ENCODE measurements at regions of chr10 and their contacts with region 1.

Region 1: GRCh38 chr10:63157845-63158624 is 24.9 kb downstream of the NRBF2 start:
- DNase-seq: peak; percentile 41
- ATAC-seq: peak; percentile 85
- H3K4me3 Mint-ChIP-seq: no peak overlapping the region
- H3K27ac Mint-ChIP-seq: no peak overlapping the region
- H3K4me1 Mint-ChIP-seq: peaks cover 4% of the 10 kb centered on the region
- H3K27me3 Mint-ChIP-seq: no peaks in the 10 kb centered on the region
- CTCF ChIP-seq: peak; percentile 93

Region 2: DNA sequence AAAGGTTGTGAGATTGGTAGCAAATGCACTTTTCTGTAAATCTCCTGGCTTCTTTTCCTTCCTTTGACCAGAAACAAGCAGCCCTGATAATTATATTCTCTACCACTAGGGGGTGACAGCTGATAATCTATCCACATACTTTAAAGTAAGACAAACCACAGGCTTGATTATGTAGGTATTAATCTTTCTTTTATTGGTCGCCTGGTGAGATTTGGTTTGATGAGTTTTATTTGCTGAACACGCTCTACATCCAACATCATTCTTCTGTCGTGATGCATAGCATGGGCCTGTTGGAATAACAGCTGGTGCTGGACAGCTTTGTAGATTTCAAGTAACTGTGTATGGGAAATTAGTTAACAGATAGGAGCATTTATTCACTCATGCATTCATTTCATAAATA is 720.3 kb before region 1 on chr10:
- CTCF ChIA-PET with region 1: interaction called, 21 read pairs
- POLR2A ChIA-PET with region 1: no interaction called
- intact Hi-C with region 1: loop called (anchors 5 kb)
- DNase-seq: no peak
- ATAC-seq: peak; percentile 63
- H3K4me3 Mint-ChIP-seq: no peak overlapping the region
- H3K27ac Mint-ChIP-seq: no peak overlapping the region
- H3K4me1 Mint-ChIP-seq: peaks cover 19% of the 10 kb centered on the region
- H3K27me3 Mint-ChIP-seq: peaks cover 6% of the 10 kb centered on the region
- CTCF ChIP-seq: peak; percentile 78

Region 3: DNA sequence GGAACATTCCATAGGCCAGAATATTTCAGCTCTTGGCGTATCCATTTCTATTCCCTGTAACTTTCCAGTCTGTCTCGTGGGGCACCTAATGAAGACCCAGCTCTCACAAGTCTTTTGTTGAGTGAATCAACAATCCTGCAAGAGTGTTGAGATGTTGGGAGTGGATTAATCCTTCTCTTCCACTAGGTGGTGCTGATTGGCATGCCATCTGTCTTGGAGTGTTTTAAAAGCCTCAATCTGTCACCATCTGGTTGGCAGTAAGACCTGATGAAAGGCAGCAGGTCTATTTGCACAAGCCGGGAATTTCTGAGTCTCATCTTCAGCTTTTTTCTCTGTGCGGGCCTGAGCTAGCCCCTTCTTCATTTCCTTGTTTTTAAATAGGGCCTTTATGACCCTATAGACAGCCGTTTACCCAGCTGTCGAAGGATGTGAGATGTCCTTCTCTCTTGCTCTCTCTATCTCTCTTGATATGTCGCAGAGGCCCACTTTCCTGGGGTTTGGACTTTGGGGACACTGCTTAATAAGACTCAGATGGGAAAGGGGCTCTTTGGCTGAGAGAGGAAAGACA is 603.3 kb before region 1 on chr10:
- CTCF ChIA-PET with region 1: interaction called, 19 read pairs
- POLR2A ChIA-PET with region 1: no interaction called
- intact Hi-C with region 1: no loop called
- DNase-seq: peak; percentile 13
- ATAC-seq: peak; percentile 53
- H3K4me3 Mint-ChIP-seq: no peak overlapping the region
- H3K27ac Mint-ChIP-seq: no peak overlapping the region
- H3K4me1 Mint-ChIP-seq: no peaks in the 10 kb centered on the region
- H3K27me3 Mint-ChIP-seq: peaks cover 12% of the 10 kb centered on the region
- CTCF ChIP-seq: peak; percentile 25

Region 4: DNA sequence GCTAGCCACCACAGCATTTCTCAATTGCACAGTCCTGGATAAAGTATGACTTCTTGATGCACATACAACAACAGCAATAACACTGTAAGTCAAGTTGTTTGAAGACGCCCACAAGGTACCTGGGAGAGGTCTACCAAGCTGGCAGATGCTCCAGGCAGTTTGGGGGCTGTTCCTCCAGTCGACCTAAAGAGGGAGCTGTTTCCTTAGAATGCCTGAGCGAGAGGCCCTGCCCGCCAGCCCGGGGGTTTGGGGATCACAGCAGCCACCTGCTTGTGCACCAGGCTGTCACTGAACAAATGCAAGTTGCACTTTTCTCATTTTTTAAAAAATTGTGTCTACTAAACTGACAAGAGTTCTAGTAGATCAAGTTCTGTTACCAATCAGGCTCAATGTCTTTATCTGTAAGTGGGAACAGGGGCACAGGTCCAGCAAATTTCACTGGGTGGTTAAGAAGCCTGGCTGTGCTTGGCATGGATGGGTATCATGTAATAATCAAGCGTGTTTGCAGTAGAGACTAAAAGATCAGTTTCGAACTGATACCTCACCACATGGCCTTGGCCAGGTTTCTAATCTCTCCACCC is 547.3 kb before region 1 on chr10:
- CTCF ChIA-PET with region 1: interaction called, 15 read pairs
- POLR2A ChIA-PET with region 1: no interaction called
- intact Hi-C with region 1: no loop called
- DNase-seq: peak; percentile 86
- ATAC-seq: peak; percentile 81
- H3K4me3 Mint-ChIP-seq: no peak overlapping the region
- H3K27ac Mint-ChIP-seq: no peak overlapping the region
- H3K4me1 Mint-ChIP-seq: peaks cover 40% of the 10 kb centered on the region
- H3K27me3 Mint-ChIP-seq: peaks cover 4% of the 10 kb centered on the region
- CTCF ChIP-seq: peak; percentile 87

Region 5: GRCh38 chr10:63083904-63084689 is 73.9 kb before region 1 on chr10:
- CTCF ChIA-PET with region 1: interaction called, 9 read pairs
- POLR2A ChIA-PET with region 1: no interaction called
- intact Hi-C with region 1: loop called (anchors 5 kb)
- DNase-seq: peak; percentile 61
- ATAC-seq: peak; percentile 75
- H3K4me3 Mint-ChIP-seq: no peak overlapping the region
- H3K27ac Mint-ChIP-seq: no peak overlapping the region
- H3K4me1 Mint-ChIP-seq: no peaks in the 10 kb centered on the region
- H3K27me3 Mint-ChIP-seq: peaks cover 16% of the 10 kb centered on the region
- CTCF ChIP-seq: peak; percentile 75

Region 6: GRCh38 chr10:63133056-63133820 is 24.8 kb before region 1 on chr10 and contains the start of gene NRBF2:
- CTCF ChIA-PET with region 1: interaction called, 33 read pairs
- POLR2A ChIA-PET with region 1: interaction called, 5 read pairs
- intact Hi-C with region 1: no loop called
- DNase-seq: peak; percentile 99
- ATAC-seq: peak; percentile 92
- H3K4me3 Mint-ChIP-seq: peak within 1 kb of the TSS; percentile 91
- H3K27ac Mint-ChIP-seq: peak within 1 kb of the TSS; percentile 94
- H3K4me1 Mint-ChIP-seq: peaks cover 32% of the 10 kb centered on the region
- H3K27me3 Mint-ChIP-seq: no peaks in the 10 kb centered on the region
- CTCF ChIP-seq: no peak
- total RNA-seq, gene NRBF2: 23.1 to 24.1 TPM

Region 7: GRCh38 chr10:63145782-63146181 is 12.3 kb before region 1 on chr10:
- CTCF ChIA-PET with region 1: interaction called, 53 read pairs
- POLR2A ChIA-PET with region 1: interaction called, 6 read pairs
- intact Hi-C with region 1: no loop called
- DNase-seq: no peak
- ATAC-seq: peak; percentile 61
- H3K4me3 Mint-ChIP-seq: no peak overlapping the region
- H3K27ac Mint-ChIP-seq: peak overlapping the region; percentile 15
- H3K4me1 Mint-ChIP-seq: peaks cover 38% of the 10 kb centered on the region
- H3K27me3 Mint-ChIP-seq: no peaks in the 10 kb centered on the region
- CTCF ChIP-seq: no peak

Measured in activated CD8-positive, alpha-beta T cell treated with anti-CD3 and anti-CD28 coated beads for 36 hours (primary cell).